HepG2 (cell line): ENCODE measurements at regions of chr17 and their contacts with region 1.

Region 1: DNA sequence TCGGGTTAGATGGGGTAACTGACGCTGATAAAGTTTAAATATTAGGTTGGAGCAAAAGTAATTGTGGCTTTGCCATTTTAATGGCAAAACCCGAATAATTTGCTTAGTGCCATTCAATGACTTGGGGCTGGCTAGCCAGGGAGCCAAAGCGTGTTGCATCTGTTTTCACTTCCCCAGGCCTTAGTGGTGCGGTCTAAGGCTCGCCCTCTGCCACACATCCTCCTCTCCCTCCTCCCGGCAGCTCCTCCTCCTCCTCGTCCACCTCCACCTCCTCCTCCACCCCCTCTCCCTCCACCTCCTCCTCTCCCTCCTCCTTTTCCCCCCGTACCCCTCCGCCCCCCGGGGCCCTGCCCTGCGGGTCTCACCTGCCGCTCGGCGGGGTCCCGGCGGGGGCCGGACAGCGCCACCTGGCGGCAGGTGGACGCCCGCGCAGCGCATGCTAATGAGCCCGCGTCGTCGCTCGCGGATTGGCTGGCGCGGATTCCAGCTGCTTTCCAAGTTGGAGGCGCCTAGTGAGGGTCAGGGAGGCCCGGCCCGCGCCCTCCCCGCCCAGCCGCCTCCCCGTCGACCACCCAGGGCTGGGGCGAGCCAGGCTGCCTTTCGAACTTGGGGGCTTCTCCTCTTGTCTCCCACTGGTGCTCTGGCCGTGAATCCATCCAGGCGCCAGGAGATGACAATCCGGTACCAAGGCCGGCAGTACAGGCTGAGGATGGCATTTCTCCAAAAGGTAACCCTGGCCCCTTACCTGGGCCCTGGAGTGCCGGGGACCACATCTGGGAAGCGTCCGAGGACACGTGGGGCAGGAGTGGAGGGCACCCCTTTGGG is 36.6 kb upstream of the RGS9 start:
- DNase-seq: peak; percentile 66
- ATAC-seq: peak; percentile 96
- H3K4me3 ChIP-seq: peak overlapping the region; percentile 65 to 80 (median 73)
- H3K27ac ChIP-seq: no peak overlapping the region
- H3K4me1 ChIP-seq: peaks cover 12% of the 10 kb centered on the region
- H3K27me3 ChIP-seq: peaks cover 0 to 7% of the 10 kb centered on the region in 2 experiments; a peak in 3 of 5 replicates
- CTCF ChIP-seq: peak; percentile 92
- EP300 ChIP-seq: 0 out of 4 replicates have a peak, but pooled peaks of 1 of the 2 experiments have one; percentile 3
- POLR2A ChIP-seq: no peak
- RAD21 ChIP-seq: peak; percentile 91

Region 2: GRCh38 chr17:64968652-64969501 is 131.7 kb before region 1 on chr17:
- CTCF ChIA-PET with region 1: no interaction called
- POLR2A ChIA-PET with region 1: no interaction called
- in situ Hi-C with region 1: no loop called
- intact Hi-C with region 1: loop called (anchors 5 kb)
- DNase-seq: no peak
- ATAC-seq: no peak
- H3K4me3 ChIP-seq: no peak overlapping the region
- H3K27ac ChIP-seq: no peak overlapping the region
- H3K4me1 ChIP-seq: peaks cover 44% of the 10 kb centered on the region
- H3K27me3 ChIP-seq: no peaks in the 10 kb centered on the region
- CTCF ChIP-seq: no peak
- EP300 ChIP-seq: no peak
- POLR2A ChIP-seq: no peak
- RAD21 ChIP-seq: no peak

Region 3: GRCh38 chr17:64975329-64976087 is 125.0 kb before region 1 on chr17:
- CTCF ChIA-PET with region 1: no interaction called
- POLR2A ChIA-PET with region 1: interaction called, 13 read pairs
- in situ Hi-C with region 1: no loop called
- intact Hi-C with region 1: no loop called
- DNase-seq: peak; percentile 87
- ATAC-seq: peak; percentile 93
- H3K4me3 ChIP-seq: peak overlapping the region; percentile 58 to 86 (median 82)
- H3K27ac ChIP-seq: peak overlapping the region; percentile 71
- H3K4me1 ChIP-seq: peaks cover 29% of the 10 kb centered on the region
- H3K27me3 ChIP-seq: no peaks in the 10 kb centered on the region
- CTCF ChIP-seq: no peak; the same call in 1 of the 2 replicates
- EP300 ChIP-seq: no peak
- POLR2A ChIP-seq: peak; percentile 60 to 95
- RAD21 ChIP-seq: peak; percentile 33

Region 4: DNA sequence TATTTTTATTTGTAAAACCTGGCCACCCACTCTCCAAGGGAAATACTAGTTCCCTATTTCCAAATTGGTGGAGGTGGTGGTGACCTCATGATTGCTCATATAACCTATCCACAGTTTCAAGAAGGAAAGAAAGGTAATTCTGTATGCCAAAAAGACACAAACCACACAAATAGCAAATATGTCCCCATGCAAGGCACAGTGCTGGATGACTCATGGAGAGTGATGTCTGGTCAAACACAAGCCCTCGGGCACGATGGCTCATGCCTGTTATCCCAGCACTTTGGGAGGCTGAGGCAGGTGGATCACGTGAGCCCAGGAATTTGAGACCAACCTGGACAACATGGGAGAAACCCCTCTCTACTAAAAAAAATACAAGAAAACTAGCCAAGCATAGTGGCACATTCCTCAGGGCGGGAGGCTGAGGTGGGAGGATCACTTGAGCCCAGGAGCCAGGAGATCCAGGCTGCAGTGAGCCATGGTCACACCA is 108.2 kb before region 1 on chr17:
- CTCF ChIA-PET with region 1: no interaction called
- POLR2A ChIA-PET with region 1: no interaction called
- in situ Hi-C with region 1: no loop called
- intact Hi-C with region 1: no loop called
- DNase-seq: peak; percentile 59
- ATAC-seq: no peak; the same call in 2 of the 3 replicates
- H3K4me3 ChIP-seq: no peak overlapping the region
- H3K27ac ChIP-seq: no peak overlapping the region
- H3K4me1 ChIP-seq: peaks cover 20% of the 10 kb centered on the region
- H3K27me3 ChIP-seq: no peaks in the 10 kb centered on the region
- CTCF ChIP-seq: no peak
- EP300 ChIP-seq: no peak
- POLR2A ChIP-seq: no peak
- RAD21 ChIP-seq: no peak

Region 5: DNA sequence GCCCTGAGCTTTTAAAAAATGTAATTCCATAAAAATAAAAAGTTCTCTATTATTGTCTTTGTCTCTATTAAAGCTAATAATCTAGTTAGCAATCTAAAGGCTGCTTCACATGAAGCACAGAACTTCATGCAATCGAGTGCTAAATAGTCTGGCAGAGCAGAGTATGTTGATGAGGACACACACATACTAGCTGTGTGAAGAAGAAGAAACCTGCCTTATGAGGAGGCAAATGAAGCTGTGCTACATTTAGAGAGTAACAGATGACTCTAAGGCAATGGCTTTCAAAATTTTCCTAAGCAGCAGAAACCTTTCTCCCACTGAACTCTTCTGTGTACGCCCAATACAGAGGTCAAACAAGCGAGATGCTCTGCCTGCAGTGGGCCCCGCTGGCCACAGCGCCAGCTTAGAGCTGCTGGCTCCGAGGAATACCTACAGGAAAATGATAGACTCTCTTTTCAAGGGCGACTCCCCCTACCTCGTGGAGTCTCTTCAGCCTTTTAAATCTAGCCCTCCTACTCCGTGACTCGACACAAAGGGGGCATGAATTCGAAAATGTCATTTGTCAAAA is 83.2 kb before region 1 on chr17:
- CTCF ChIA-PET with region 1: no interaction called
- POLR2A ChIA-PET with region 1: no interaction called
- in situ Hi-C with region 1: no loop called
- intact Hi-C with region 1: loop called (anchors 5 kb)
- DNase-seq: peak; percentile 53
- ATAC-seq: peak; percentile 98
- H3K4me3 ChIP-seq: no peak overlapping the region
- H3K27ac ChIP-seq: no peak overlapping the region
- H3K4me1 ChIP-seq: peaks cover 38% of the 10 kb centered on the region
- H3K27me3 ChIP-seq: no peaks in the 10 kb centered on the region
- CTCF ChIP-seq: peak; percentile 45
- EP300 ChIP-seq: no peak
- POLR2A ChIP-seq: no peak
- RAD21 ChIP-seq: peak; percentile 32; the same call in 1 of the 2 replicates

Region 6: DNA sequence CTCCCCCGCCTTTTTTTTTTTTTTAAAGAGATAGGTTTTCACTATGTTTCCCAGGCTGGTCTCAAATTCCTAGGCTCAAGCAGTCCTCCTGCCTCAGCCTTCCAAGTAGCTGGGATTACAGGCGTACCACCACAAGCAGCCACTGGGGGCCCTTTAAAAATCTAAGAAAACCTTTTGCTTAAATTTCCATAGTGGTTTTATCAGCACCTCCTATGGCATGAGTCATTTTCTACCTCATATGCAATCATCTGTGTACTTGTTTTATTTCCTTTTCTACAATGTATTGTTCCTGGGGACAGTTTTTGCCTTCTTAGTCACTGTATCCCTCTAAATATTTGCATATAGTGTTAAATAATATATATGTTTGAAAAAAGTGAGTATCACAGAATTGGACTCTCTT is 73.2 kb before region 1 on chr17:
- CTCF ChIA-PET with region 1: no interaction called
- POLR2A ChIA-PET with region 1: no interaction called
- in situ Hi-C with region 1: no loop called
- intact Hi-C with region 1: loop called (anchors 1 kb)
- DNase-seq: peak; percentile 15
- ATAC-seq: peak; percentile 67
- H3K4me3 ChIP-seq: no peak overlapping the region
- H3K27ac ChIP-seq: no peak overlapping the region
- H3K4me1 ChIP-seq: peaks cover 21% of the 10 kb centered on the region
- H3K27me3 ChIP-seq: no peaks in the 10 kb centered on the region
- CTCF ChIP-seq: no peak
- EP300 ChIP-seq: no peak
- POLR2A ChIP-seq: no peak
- RAD21 ChIP-seq: no peak

Region 7: DNA sequence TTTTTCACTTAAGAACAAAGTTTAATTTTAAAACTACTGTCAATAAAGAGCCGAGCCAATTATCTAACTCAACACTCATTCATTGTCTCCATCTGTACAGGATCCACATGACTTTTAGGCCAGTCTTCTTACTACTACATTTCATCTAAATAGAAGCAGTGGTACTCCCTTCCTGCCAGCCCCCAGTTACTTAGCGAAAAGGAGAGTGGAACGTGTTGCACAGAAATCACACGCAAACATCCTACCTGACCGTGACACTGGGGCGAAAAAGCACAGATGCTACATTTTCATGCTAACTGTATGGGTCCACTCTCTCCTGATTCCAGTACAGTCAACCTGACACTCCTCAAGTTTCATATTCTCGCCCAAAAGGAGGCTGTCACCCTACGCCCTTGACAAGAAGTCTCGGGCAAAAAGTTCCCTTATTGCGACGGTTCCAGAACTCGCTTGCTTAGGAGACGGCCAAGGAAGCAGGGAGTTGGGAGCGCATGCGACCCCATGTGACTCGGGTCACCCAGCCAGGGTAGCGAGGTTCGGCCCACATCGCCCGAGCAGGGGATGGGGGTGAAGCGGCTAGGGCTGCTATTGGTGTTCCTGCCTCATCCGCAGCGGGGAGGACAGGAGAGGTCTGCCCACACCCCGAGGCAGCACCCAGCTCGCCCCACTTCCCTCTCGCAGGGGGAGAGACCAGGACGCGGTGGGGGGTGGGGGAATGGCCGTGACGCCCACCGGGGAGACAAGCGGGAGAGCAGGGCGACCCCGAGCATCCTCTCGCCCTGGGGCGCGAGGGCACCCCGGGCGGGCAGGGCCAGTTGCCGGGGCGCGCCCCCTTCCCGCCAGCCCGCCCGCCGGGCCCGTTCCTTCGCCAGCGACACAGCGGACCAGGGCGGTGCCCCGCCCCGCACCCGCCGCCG is 44.9 kb before region 1 on chr17:
- CTCF ChIA-PET with region 1: no interaction called
- POLR2A ChIA-PET with region 1: interaction called, 11 read pairs
- in situ Hi-C with region 1: no loop called
- intact Hi-C with region 1: loop called (anchors 5 kb)
- DNase-seq: peak; percentile 27
- ATAC-seq: peak; percentile 68
- H3K4me3 ChIP-seq: peak overlapping the region; percentile 81 to 98 (median 92)
- H3K27ac ChIP-seq: peak overlapping the region; percentile 96
- H3K4me1 ChIP-seq: peaks cover 36% of the 10 kb centered on the region
- H3K27me3 ChIP-seq: no peaks in the 10 kb centered on the region; a peak in 1 of 5 replicates
- CTCF ChIP-seq: 0 out of 2 replicates have a peak, but pooled peaks have one; percentile 3
- EP300 ChIP-seq: no peak
- POLR2A ChIP-seq: 0 out of 4 replicates have a peak, but pooled peaks of 1 of the 2 experiments have one; percentile 8
- RAD21 ChIP-seq: no peak

Region 8: GRCh38 chr17:65064452-65065019 is 36.0 kb before region 1 on chr17:
- CTCF ChIA-PET with region 1: no interaction called
- POLR2A ChIA-PET with region 1: no interaction called
- in situ Hi-C with region 1: no loop called
- intact Hi-C with region 1: loop called (anchors 5 kb)
- DNase-seq: peak; percentile 88
- ATAC-seq: peak; percentile 80
- H3K4me3 ChIP-seq: peak overlapping the region in 1 of 3 experiments; percentile 27; a peak in 2 of 6 replicates
- H3K27ac ChIP-seq: peak overlapping the region; percentile 28
- H3K4me1 ChIP-seq: peaks cover 40% of the 10 kb centered on the region
- H3K27me3 ChIP-seq: no peaks in the 10 kb centered on the region
- CTCF ChIP-seq: peak; percentile 6; the same call in 1 of the 2 replicates
- EP300 ChIP-seq: peak in 1 of 2 experiments; percentile 23; a peak in 1 of 4 replicates
- POLR2A ChIP-seq: no peak
- RAD21 ChIP-seq: no peak

Region 9: GRCh38 chr17:65314212-65314611 is 213.7 kb after region 1 on chr17:
- CTCF ChIA-PET with region 1: no interaction called
- POLR2A ChIA-PET with region 1: no interaction called
- in situ Hi-C with region 1: no loop called
- intact Hi-C with region 1: no loop called
- DNase-seq: no peak
- ATAC-seq: no peak
- H3K4me3 ChIP-seq: no peak overlapping the region
- H3K27ac ChIP-seq: no peak overlapping the region
- H3K4me1 ChIP-seq: no peaks in the 10 kb centered on the region
- H3K27me3 ChIP-seq: peaks cover 0 to 26% of the 10 kb centered on the region in 2 experiments; a peak in 3 of 5 replicates
- CTCF ChIP-seq: no peak
- EP300 ChIP-seq: no peak
- POLR2A ChIP-seq: no peak
- RAD21 ChIP-seq: no peak